ENCODE measurements at regions of chr12 and their contacts with region 1.

Region 1: DNA sequence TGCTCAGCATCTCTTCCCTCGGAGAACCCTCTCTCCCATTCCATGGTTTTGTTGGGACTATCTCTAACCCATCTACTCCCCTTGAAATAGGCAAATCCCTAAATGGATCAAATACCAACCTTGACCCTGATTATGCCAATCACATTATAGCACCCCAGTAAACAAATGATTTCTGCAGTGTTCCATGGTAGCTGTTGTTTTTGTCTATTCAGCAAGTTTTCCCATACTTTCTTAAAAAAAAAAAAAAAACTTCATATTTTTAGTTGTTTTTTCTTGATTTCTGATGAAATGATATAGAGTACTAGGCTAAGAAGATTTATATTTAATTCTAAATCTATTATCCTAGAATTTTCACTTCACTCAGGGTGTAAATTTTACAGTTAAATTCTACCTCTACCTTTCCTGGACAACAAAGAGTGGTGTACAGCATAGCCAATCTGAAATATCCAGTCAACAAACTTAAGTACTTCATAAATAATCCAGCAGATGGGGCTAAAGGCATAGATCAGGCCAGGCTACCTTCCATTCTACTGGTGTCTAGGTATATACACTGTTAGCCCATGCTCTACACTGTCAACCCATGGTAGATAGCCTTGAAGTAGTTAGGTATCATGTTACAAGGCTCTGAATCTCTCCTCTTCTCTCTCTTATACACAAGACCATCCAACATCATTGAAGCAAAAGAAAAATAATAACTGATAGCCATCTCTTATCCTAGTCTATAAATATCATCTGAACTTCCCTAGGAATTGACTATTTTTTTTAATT is 82.2 kb downstream of the PLEKHG7 start:
- DNase-seq: no peak
- ATAC-seq: peak; percentile 90 to 92
- H3K4me3 ChIP-seq: no peak overlapping the region
- H3K27ac ChIP-seq: no peak overlapping the region
- H3K4me1 ChIP-seq: peaks cover 3% of the 10 kb centered on the region
- H3K27me3 ChIP-seq: no peaks in the 10 kb centered on the region

Region 2: DNA sequence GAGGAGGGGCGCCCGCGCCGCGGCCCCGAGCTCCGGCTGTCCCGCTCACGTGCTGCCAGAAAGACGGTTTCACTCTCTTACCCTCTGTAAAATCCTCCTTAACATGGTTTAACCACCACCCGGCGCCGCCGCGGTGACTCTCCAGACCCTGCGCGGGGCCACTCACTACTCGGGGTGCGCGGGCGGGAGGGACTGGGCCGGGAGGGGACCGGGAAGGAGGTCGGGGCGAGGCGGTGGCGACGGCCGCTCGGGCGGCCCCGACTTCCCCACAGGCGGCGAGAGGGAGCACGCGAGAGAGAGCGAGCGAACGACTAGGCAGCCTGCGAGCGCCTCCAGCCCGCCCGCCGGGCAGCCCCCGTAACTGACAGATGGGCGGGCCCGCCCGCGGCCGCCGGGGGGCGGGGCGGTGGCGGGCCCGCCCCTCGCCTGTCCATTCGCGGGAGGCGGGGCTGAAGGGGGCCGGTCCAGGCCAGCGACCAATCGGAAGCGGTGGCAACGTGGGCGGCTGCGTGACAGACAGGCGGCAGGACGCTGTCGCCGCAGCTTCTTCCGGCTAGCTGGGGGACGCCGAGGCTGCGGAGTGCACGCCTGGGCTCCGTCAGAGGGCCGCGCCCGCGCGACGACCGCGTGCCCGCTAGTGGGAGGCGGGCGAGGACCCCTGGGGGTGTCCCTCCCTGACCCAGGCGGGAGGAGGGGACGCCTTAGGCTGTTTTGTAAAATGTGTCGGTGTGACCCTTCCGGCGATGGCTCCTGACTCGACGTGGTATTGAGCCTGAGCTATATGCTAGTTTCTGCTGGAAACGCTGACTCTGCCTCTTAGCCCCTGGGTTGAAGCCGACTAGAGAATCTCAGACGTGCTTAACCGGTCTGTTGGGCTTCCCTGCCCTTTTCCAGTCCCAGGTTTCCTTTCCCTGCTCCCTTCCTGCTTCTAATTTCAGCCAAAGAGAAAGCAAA is 144.3 kb after region 1 on chr12 and contains the start of gene EEA1:
- intact Hi-C with region 1: loop called in 1 of 4 experiments (anchors 10 kb)
- DNase-seq: peak; percentile 98 to 99 (median 99)
- ATAC-seq: peak; percentile 96 to 97
- H3K4me3 ChIP-seq: peak within 1 kb of the TSS; percentile 87
- H3K27ac ChIP-seq: peak within 1 kb of the TSS; percentile 100
- H3K4me1 ChIP-seq: peaks cover 2% of the 10 kb centered on the region
- H3K27me3 ChIP-seq: no peaks in the 10 kb centered on the region
- total RNA-seq, gene EEA1: 21.6 to 27.2 (median 24.3) TPM

Region 3: GRCh38 chr12:92955997-92956663 is 171.2 kb after region 1 on chr12:
- intact Hi-C with region 1: no loop called
- DNase-seq: no peak
- ATAC-seq: no peak
- H3K4me3 ChIP-seq: no peak overlapping the region
- H3K27ac ChIP-seq: no peak overlapping the region
- H3K4me1 ChIP-seq: no peaks in the 10 kb centered on the region
- H3K27me3 ChIP-seq: no peaks in the 10 kb centered on the region

Region 4: GRCh38 chr12:92995258-92995903 is 210.4 kb after region 1 on chr12:
- intact Hi-C with region 1: no loop called
- DNase-seq: no peak
- ATAC-seq: no peak
- H3K4me3 ChIP-seq: no peak overlapping the region
- H3K27ac ChIP-seq: no peak overlapping the region
- H3K4me1 ChIP-seq: no peaks in the 10 kb centered on the region
- H3K27me3 ChIP-seq: no peaks in the 10 kb centered on the region

Region 5: GRCh38 chr12:93419388-93420034 is 634.5 kb after region 1 on chr12:
- intact Hi-C with region 1: loop called in 1 of 4 experiments (anchors 10 kb)
- DNase-seq: no peak
- ATAC-seq: peak in 1 of 2 donors; percentile 53
- H3K4me3 ChIP-seq: no peak overlapping the region
- H3K27ac ChIP-seq: no peak overlapping the region
- H3K4me1 ChIP-seq: no peaks in the 10 kb centered on the region
- H3K27me3 ChIP-seq: no peaks in the 10 kb centered on the region